Naive thymus-derived CD4-positive, alpha-beta T cell (primary cell): ENCODE measurements at regions of chr20 and their contacts with region 1.

Region 1: GRCh38 chr20:25195014-25195961 is at the start of gene ENTPD6:
- DNase-seq: peak; percentile 88 to 99 (median 94)
- ATAC-seq: peak; percentile 89
- H3K4me3 ChIP-seq: peak within 1 kb of the TSS; percentile 85
- H3K4me3 Mint-ChIP-seq: peak within 1 kb of the TSS; percentile 81 to 97 (median 92)
- H3K27ac ChIP-seq: peak within 1 kb of the TSS; percentile 91
- H3K27ac Mint-ChIP-seq: peak within 1 kb of the TSS; percentile 75 to 96 (median 93)
- H3K4me1 ChIP-seq: peaks cover 19 to 29% of the 10 kb centered on the region in 2 donors
- H3K4me1 Mint-ChIP-seq: peaks cover 23 to 56% (median 44%) of the 10 kb centered on the region in 7 donors
- H3K27me3 ChIP-seq: no peaks in the 10 kb centered on the region
- H3K27me3 Mint-ChIP-seq: peaks cover 0 to 6% (median 0%) of the 10 kb centered on the region in 5 donors
- total RNA-seq, gene ENTPD6: 41.1 to 108 (median 74.4) TPM

Region 2: GRCh38 chr20:23415959-23416583 is 1779.2 kb before region 1 on chr20:
- CTCF ChIA-PET with region 1: no interaction called
- POLR2A ChIA-PET with region 1: no interaction called
- intact Hi-C with region 1: loop called in 1 of 2 experiments (anchors 2 kb)
- DNase-seq: no peak
- ATAC-seq: peak; percentile 52
- H3K4me3 ChIP-seq: no peak overlapping the region
- H3K4me3 Mint-ChIP-seq: peak overlapping the region in 1 of 10 donors; percentile 10
- H3K27ac ChIP-seq: no peak overlapping the region
- H3K27ac Mint-ChIP-seq: peak overlapping the region in 2 of 9 donors; percentile 7 to 36
- H3K4me1 ChIP-seq: peaks cover 7 to 31% of the 10 kb centered on the region in 2 donors
- H3K4me1 Mint-ChIP-seq: peaks cover 29 to 69% (median 59%) of the 10 kb centered on the region in 7 donors
- H3K27me3 ChIP-seq: no peaks in the 10 kb centered on the region
- H3K27me3 Mint-ChIP-seq: no peaks in the 10 kb centered on the region

Region 3: GRCh38 chr20:24773751-24774201 is 421.5 kb before region 1 on chr20:
- CTCF ChIA-PET with region 1: no interaction called
- POLR2A ChIA-PET with region 1: no interaction called
- intact Hi-C with region 1: no loop called
- DNase-seq: no peak
- ATAC-seq: no peak
- H3K4me3 ChIP-seq: no peak overlapping the region
- H3K4me3 Mint-ChIP-seq: no peak overlapping the region
- H3K27ac ChIP-seq: no peak overlapping the region
- H3K27ac Mint-ChIP-seq: no peak overlapping the region
- H3K4me1 ChIP-seq: no peaks in the 10 kb centered on the region
- H3K4me1 Mint-ChIP-seq: peaks cover 0 to 6% (median 0%) of the 10 kb centered on the region in 7 donors
- H3K27me3 ChIP-seq: no peaks in the 10 kb centered on the region
- H3K27me3 Mint-ChIP-seq: peaks cover 23 to 43% (median 35%) of the 10 kb centered on the region in 5 donors

Region 4: GRCh38 chr20:25090492-25091429 is 104.5 kb before region 1 on chr20:
- CTCF ChIA-PET with region 1: no interaction called
- POLR2A ChIA-PET with region 1: interaction called, 17 read pairs
- intact Hi-C with region 1: loop called in 1 of 2 experiments (anchors 1 kb)
- DNase-seq: peak in 8 of 9 donors; percentile 55 to 87 (median 82)
- ATAC-seq: peak; percentile 98
- H3K4me3 ChIP-seq: peak overlapping the region; percentile 36
- H3K4me3 Mint-ChIP-seq: peak overlapping the region; percentile 40 to 79 (median 66)
- H3K27ac ChIP-seq: peak overlapping the region; percentile 41
- H3K27ac Mint-ChIP-seq: peak overlapping the region; percentile 37 to 90 (median 75)
- H3K4me1 ChIP-seq: peaks cover 21 to 27% of the 10 kb centered on the region in 2 donors
- H3K4me1 Mint-ChIP-seq: peaks cover 12 to 56% (median 42%) of the 10 kb centered on the region in 7 donors
- H3K27me3 ChIP-seq: no peaks in the 10 kb centered on the region
- H3K27me3 Mint-ChIP-seq: peaks cover 6 to 19% (median 7%) of the 10 kb centered on the region in 5 donors

Region 5: DNA sequence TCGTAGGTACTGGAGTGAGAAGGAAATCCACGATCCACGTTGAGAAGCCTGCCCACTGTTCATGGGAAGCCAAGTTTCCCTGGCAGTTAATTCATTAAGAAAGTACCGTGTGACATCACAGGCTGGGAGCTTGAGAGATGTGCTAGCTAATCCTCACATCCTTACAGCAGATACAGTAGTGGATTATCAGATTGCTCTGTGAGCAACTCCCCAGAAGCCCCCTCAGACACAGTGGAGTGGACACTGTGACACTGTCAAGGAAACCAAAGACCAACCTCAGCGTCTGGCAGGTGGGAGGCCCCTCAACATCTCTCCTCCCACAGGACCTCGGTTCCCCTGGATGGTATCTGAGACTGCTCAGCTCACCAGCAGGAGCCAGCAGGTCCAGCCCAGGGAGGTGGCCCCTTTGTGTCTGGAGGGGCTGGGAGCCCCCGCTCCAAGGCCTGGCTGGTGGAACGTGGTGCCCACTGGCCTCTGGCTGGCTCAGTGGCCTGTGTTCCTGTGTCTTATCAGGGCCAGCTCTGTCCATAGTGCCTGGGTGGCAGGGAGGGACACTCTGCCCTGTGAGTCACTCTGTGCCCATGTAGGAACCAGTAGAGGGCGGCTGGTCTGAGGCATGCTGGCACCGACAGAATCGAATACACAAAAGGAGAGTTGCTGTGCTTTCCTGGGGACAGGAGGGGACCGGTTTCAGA is 59.8 kb after region 1 on chr20:
- CTCF ChIA-PET with region 1: interaction called, 6 read pairs
- POLR2A ChIA-PET with region 1: interaction called, 21 read pairs
- intact Hi-C with region 1: loop called in 1 of 2 experiments (anchors 1 kb)
- DNase-seq: peak in 1 of 9 donors; percentile 42
- ATAC-seq: no peak
- H3K4me3 ChIP-seq: no peak overlapping the region
- H3K4me3 Mint-ChIP-seq: peak overlapping the region in 1 of 10 donors; percentile 50
- H3K27ac ChIP-seq: no peak overlapping the region
- H3K27ac Mint-ChIP-seq: peak overlapping the region in 5 of 9 donors; percentile 33 to 92 (median 54)
- H3K4me1 ChIP-seq: peaks cover 0 to 18% of the 10 kb centered on the region in 2 donors
- H3K4me1 Mint-ChIP-seq: peaks cover 32 to 80% (median 74%) of the 10 kb centered on the region in 7 donors
- H3K27me3 ChIP-seq: no peaks in the 10 kb centered on the region
- H3K27me3 Mint-ChIP-seq: no peaks in the 10 kb centered on the region

Region 6: DNA sequence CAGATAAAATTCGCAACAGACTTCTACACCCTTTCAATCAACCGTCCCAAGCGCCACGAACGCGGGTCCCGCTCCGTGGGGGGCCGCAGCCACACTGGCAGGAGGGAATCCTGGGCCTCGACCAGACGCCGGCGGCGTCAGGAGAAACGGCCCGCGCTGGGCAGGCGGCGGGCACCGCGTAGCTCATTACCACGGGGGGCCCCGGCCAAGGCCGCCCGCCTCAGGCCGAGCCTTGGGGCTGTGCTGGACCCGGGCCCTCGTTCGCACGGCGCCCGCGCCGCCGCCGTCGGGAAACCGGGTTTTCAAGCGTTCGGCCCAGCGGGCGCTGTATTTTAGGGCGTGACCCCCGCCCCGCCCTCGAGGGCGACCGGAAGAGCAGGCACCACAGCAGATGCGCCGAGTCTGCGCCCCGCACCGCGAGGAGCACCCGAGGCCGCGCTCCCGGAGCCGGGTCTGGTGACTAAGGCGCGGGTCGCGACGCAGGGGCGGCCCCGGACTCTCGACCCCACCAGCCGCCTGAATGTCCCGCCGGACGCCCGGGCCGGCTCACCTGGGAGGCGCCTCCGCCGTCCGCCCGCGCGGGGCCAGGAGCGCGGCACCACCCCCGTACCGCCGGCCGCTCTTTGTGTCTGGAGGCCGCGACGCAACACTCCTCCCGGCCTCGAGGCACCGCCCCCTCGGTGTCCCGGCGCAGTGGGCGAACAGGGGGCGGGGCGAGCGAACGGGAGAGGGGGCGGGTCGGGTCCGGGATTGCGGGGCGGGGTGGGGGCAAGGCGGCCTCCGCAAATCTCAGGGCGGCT is 389.8 kb after region 1 on chr20 and contains the start of gene NINL:
- CTCF ChIA-PET with region 1: no interaction called
- POLR2A ChIA-PET with region 1: no interaction called
- intact Hi-C with region 1: loop called in 1 of 2 experiments (anchors 5 kb)
- DNase-seq: peak; percentile 6 to 64 (median 47)
- ATAC-seq: peak; percentile 84
- H3K4me3 ChIP-seq: peak within 1 kb of the TSS; percentile 50
- H3K4me3 Mint-ChIP-seq: peak within 1 kb of the TSS; percentile 68 to 91 (median 80)
- H3K27ac ChIP-seq: peak within 1 kb of the TSS; percentile 33
- H3K27ac Mint-ChIP-seq: peak within 1 kb of the TSS in 8 of 9 donors; percentile 9 to 86 (median 62)
- H3K4me1 ChIP-seq: no peaks in the 10 kb centered on the region
- H3K4me1 Mint-ChIP-seq: peaks cover 0 to 19% (median 8%) of the 10 kb centered on the region in 7 donors
- H3K27me3 ChIP-seq: no peaks in the 10 kb centered on the region
- H3K27me3 Mint-ChIP-seq: peaks cover 0 to 21% (median 15%) of the 10 kb centered on the region in 5 donors
- total RNA-seq, gene NINL: 1.4 to 4.2 (median 3.0) TPM